ENCODE measurements at regions of chr6 and their contacts with region 1.

Region 1: DNA sequence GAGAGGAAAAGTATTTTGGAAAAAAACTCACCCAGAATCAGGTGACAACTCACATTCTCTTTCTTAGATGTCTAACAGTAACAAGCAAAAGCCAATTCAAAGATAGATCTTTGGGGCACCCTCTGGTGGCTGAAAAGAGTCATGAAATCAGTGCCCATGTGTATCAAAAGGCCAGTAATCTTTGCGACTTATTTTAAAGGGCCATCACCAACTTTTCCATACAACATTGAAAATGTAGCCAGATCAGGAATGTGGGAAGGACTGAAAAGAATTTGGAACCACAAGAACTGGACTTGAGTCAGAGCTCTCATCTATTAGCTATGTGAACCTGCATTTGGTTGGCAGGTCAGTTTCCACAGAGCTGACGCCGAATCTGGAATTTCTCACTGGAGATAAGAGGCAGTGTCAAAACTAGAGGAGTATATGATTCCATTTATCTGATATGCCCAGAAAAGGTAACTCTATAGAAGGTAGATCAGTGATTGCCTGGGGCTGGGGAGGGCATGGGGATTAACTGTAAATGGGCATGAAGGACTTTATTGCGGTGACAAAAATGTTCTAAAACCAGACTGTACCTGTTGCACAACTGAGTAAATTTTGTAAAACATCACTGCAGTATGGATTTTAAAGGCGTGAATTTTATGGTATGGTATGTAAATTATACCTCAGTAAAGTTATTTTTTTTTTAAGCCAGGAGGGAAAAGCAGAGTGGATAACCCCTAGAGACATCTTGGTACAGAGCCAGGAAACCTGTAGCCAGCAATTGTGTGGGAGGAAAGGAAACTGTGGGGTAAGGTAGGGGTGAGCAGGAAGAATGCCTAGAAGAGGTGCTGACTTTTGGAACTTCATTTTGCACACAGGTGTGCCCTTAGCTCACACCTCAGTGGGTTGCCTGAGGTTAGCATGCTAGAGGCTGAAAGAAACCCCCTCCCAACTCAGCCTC is 117.1 kb upstream of the ASF1A start:
- DNase-seq: peak; percentile 77 to 86 (median 82)
- H3K4me3 ChIP-seq: no peak overlapping the region
- H3K27ac ChIP-seq: no peak overlapping the region
- H3K4me1 ChIP-seq: peaks cover 0 to 9% (median 3%) of the 10 kb centered on the region in 4 experiments
- H3K27me3 ChIP-seq: no peaks in the 10 kb centered on the region

Region 2: GRCh38 chr6:118524686-118525085 is 252.2 kb before region 1 on chr6:
- CTCF ChIA-PET with region 1: no interaction called
- POLR2A ChIA-PET with region 1: no interaction called
- DNase-seq: no peak
- H3K4me3 ChIP-seq: no peak overlapping the region
- H3K27ac ChIP-seq: no peak overlapping the region
- H3K4me1 ChIP-seq: no peaks in the 10 kb centered on the region
- H3K27me3 ChIP-seq: no peaks in the 10 kb centered on the region

Region 3: GRCh38 chr6:118787724-118788423 is 11.0 kb after region 1 on chr6:
- CTCF ChIA-PET with region 1: interaction called, 10 read pairs
- POLR2A ChIA-PET with region 1: no interaction called
- DNase-seq: peak in 1 of 3 donors; percentile 19
- H3K4me3 ChIP-seq: no peak overlapping the region
- H3K27ac ChIP-seq: no peak overlapping the region
- H3K4me1 ChIP-seq: peaks cover 3 to 18% (median 11%) of the 10 kb centered on the region in 4 experiments
- H3K27me3 ChIP-seq: no peaks in the 10 kb centered on the region

Region 4: DNA sequence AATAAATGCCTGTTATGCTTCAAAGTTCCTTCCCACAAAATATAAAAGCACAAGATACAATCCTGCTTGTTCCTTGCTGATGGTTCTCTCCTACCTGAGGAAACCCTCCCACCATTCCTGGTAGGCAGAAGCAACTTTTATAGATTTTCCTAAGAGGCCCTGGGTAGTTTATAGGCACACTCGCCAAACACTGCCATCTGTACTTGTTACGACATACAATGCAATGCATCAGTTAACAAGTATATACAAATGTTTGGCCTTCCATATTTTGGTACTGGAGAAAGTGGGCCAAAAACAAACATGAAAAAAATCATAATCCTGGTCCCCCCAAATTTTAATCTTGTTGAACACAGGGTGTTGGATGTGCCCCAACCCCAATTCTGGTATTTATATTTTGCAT is 141.4 kb after region 1 on chr6:
- CTCF ChIA-PET with region 1: no interaction called
- POLR2A ChIA-PET with region 1: no interaction called
- DNase-seq: no peak
- H3K4me3 ChIP-seq: no peak overlapping the region
- H3K27ac ChIP-seq: no peak overlapping the region
- H3K4me1 ChIP-seq: no peaks in the 10 kb centered on the region
- H3K27me3 ChIP-seq: no peaks in the 10 kb centered on the region

Region 5: DNA sequence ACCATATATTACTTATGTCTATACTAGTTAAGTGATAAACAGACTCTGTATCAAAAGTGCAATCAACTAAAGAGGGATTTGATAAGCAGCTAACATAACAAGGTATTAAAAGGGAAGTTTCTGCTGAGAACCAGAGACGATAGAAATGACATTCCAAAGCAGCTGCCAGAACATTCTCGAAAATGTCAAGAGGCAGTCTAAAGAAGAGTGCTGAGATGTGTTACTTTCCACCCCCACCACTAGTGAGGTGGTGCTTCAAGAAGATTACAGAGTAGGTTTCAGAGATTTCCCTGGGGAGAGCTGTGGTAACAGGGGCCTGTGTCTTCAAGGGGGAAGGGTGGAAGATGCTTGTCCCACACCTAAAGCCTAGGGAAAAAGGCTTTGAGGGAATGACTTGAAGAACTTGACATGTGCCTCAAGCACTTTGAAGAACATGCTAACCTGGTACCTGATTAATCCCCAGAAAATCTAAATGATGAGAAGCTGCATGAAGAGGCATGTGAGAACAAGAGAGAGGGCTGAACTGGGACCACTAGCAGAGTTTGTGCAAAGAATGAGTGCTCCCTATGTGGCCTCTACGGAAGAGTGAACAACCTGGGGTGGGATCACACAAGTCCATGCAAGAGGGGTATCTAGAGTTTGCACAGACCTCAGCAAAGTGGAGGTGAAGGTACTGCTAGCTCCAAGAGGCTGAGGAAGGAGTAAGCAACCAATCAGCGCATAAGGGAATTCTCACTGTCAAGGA is 296.6 kb after region 1 on chr6:
- CTCF ChIA-PET with region 1: no interaction called
- POLR2A ChIA-PET with region 1: no interaction called
- DNase-seq: no peak
- H3K4me3 ChIP-seq: no peak overlapping the region
- H3K27ac ChIP-seq: no peak overlapping the region
- H3K4me1 ChIP-seq: peaks cover 0 to 8% (median 7%) of the 10 kb centered on the region in 4 experiments
- H3K27me3 ChIP-seq: peaks cover 0 to 9% (median 3%) of the 10 kb centered on the region in 5 experiments

Measured in common myeloid progenitor, CD34-positive (primary cell).